ENCODE measurements at regions of chr13 and their contacts with region 1.

Region 1: GRCh38 chr13:49585220-49586157 is at the start of gene RCBTB1:
- DNase-seq: peak; percentile 89
- ATAC-seq: peak; percentile 88
- H3K4me3 ChIP-seq: peak within 1 kb of the TSS; percentile 85 to 91 (median 87)
- H3K4me3 Mint-ChIP-seq: peak within 1 kb of the TSS; percentile 96
- H3K27ac ChIP-seq: peak within 1 kb of the TSS; percentile 88 to 90
- H3K27ac Mint-ChIP-seq: peak within 1 kb of the TSS; percentile 92
- H3K4me1 ChIP-seq: peaks cover 17 to 23% of the 10 kb centered on the region in 2 donors
- H3K4me1 Mint-ChIP-seq: peaks cover 29% of the 10 kb centered on the region
- H3K27me3 ChIP-seq: no peaks in the 10 kb centered on the region
- H3K27me3 Mint-ChIP-seq: no peaks in the 10 kb centered on the region
- CTCF ChIP-seq: no peak
- total RNA-seq, gene RCBTB1: 35.2 and 42.1 TPM in 2 replicates

Region 2: GRCh38 chr13:49247643-49248621 is 337.6 kb before region 1 on chr13 and contains the start of gene CDADC1:
- CTCF ChIA-PET with region 1: no interaction called
- POLR2A ChIA-PET with region 1: interaction called, 8 read pairs
- intact Hi-C with region 1: loop called (anchors 1 kb)
- DNase-seq: peak; percentile 92
- ATAC-seq: peak; percentile 95
- H3K4me3 ChIP-seq: peak within 1 kb of the TSS; percentile 86 to 92 (median 89)
- H3K4me3 Mint-ChIP-seq: peak within 1 kb of the TSS; percentile 100
- H3K27ac ChIP-seq: peak within 1 kb of the TSS; percentile 76 to 86
- H3K27ac Mint-ChIP-seq: peak within 1 kb of the TSS; percentile 97
- H3K4me1 ChIP-seq: peaks cover 10 to 11% of the 10 kb centered on the region in 2 donors
- H3K4me1 Mint-ChIP-seq: peaks cover 26% of the 10 kb centered on the region
- H3K27me3 ChIP-seq: no peaks in the 10 kb centered on the region
- H3K27me3 Mint-ChIP-seq: no peaks in the 10 kb centered on the region
- CTCF ChIP-seq: no peak
- total RNA-seq, gene CDADC1: 14.5 and 15.1 TPM in 2 replicates

Region 3: DNA sequence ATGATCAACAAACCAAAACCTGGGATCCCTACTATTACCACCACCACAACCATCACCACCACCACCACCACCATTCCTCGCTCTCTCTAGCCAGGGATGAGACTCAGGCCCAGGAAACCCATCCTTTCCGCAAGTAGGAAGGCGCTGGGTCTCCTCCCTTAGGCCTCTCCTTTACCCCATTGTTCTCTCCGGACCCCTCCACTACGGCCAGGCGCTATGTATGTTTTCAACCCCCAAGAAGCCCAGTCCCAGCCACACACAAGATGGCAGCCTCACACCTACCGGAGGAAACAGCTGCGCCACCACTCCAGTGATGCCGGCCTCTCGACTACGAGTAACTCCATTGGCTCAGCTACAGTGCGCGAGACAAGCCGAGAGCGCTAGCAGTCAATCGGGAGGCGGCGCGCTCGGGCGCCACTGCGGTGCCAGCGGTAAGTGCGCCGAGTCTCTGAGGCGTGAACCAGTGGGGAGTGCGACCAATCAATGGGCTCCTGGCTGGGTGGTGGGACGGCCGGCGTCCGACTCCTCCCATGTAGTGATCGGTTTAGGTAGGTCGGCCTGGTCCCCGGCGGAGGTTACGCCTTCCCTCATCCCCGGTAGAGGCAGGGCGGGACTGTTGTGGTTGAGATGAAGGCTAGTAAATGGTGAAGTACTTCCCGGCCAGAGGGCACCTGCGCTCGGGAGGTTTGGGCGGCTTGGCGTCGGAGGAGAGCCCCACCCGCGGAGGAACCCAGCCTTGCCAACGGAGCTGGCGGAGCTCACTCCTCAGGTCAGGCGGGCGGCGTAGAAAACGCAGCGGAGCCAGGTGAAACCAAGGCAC is 141.6 kb before region 1 on chr13 and contains the starts of genes CAB39L and SETDB2:
- CTCF ChIA-PET with region 1: no interaction called
- POLR2A ChIA-PET with region 1: interaction called, 6 read pairs
- intact Hi-C with region 1: loop called (anchors 1 kb)
- DNase-seq: peak; percentile 100
- ATAC-seq: peak; percentile 89
- H3K4me3 ChIP-seq: peak within 1 kb of the TSS; percentile 63 to 98 (median 81)
- H3K4me3 Mint-ChIP-seq: peak within 1 kb of the TSS; percentile 96
- H3K27ac ChIP-seq: peak within 1 kb of the TSS; percentile 97
- H3K27ac Mint-ChIP-seq: peak within 1 kb of the TSS; percentile 99
- H3K4me1 ChIP-seq: peaks cover 33 to 51% of the 10 kb centered on the region in 2 donors
- H3K4me1 Mint-ChIP-seq: peaks cover 71% of the 10 kb centered on the region
- H3K27me3 ChIP-seq: no peaks in the 10 kb centered on the region
- H3K27me3 Mint-ChIP-seq: no peaks in the 10 kb centered on the region
- CTCF ChIP-seq: peak; percentile 34
- total RNA-seq, gene CAB39L: 8.9 and 9.6 TPM in 2 replicates
- total RNA-seq, gene SETDB2: 38.2 and 40.1 TPM in 2 replicates

Region 4: DNA sequence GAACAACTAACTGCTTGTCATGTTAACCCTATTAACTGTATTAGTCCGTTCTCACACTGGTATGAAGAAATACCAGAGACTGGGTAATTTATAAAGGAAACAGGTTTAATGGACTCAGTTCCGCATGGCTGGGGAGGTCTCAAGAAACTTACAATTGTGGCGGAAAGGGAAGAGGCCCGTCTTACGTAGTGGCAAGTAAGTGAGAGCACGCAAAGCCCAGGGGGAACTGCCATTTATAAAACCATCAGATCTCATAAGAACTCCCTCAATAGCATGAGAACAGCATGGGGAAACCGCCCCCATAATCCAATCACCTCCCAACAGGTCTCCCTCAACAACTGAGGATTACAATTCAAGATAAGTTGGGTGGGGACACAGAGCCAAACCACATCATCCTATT is 55.0 kb before region 1 on chr13:
- CTCF ChIA-PET with region 1: no interaction called
- POLR2A ChIA-PET with region 1: interaction called, 3 read pairs
- intact Hi-C with region 1: loop called (anchors 2 kb)
- DNase-seq: peak; percentile 77
- ATAC-seq: peak; percentile 84
- H3K4me3 ChIP-seq: peak overlapping the region in 1 of 5 experiments; percentile 5
- H3K4me3 Mint-ChIP-seq: peak overlapping the region; percentile 59
- H3K27ac ChIP-seq: peak overlapping the region; percentile 66 to 82
- H3K27ac Mint-ChIP-seq: peak overlapping the region; percentile 92
- H3K4me1 ChIP-seq: peaks cover 44 to 50% of the 10 kb centered on the region in 2 donors
- H3K4me1 Mint-ChIP-seq: peaks cover 66% of the 10 kb centered on the region
- H3K27me3 ChIP-seq: no peaks in the 10 kb centered on the region
- H3K27me3 Mint-ChIP-seq: no peaks in the 10 kb centered on the region
- CTCF ChIP-seq: no peak

Region 5: GRCh38 chr13:49546561-49546960 is 38.9 kb before region 1 on chr13:
- CTCF ChIA-PET with region 1: no interaction called
- POLR2A ChIA-PET with region 1: no interaction called
- intact Hi-C with region 1: no loop called
- DNase-seq: no peak
- ATAC-seq: no peak
- H3K4me3 ChIP-seq: no peak overlapping the region
- H3K4me3 Mint-ChIP-seq: no peak overlapping the region
- H3K27ac ChIP-seq: no peak overlapping the region
- H3K27ac Mint-ChIP-seq: no peak overlapping the region
- H3K4me1 ChIP-seq: peaks cover 0 to 4% of the 10 kb centered on the region in 2 donors
- H3K4me1 Mint-ChIP-seq: peaks cover 4% of the 10 kb centered on the region
- H3K27me3 ChIP-seq: no peaks in the 10 kb centered on the region
- H3K27me3 Mint-ChIP-seq: no peaks in the 10 kb centered on the region
- CTCF ChIP-seq: no peak

Region 6: DNA sequence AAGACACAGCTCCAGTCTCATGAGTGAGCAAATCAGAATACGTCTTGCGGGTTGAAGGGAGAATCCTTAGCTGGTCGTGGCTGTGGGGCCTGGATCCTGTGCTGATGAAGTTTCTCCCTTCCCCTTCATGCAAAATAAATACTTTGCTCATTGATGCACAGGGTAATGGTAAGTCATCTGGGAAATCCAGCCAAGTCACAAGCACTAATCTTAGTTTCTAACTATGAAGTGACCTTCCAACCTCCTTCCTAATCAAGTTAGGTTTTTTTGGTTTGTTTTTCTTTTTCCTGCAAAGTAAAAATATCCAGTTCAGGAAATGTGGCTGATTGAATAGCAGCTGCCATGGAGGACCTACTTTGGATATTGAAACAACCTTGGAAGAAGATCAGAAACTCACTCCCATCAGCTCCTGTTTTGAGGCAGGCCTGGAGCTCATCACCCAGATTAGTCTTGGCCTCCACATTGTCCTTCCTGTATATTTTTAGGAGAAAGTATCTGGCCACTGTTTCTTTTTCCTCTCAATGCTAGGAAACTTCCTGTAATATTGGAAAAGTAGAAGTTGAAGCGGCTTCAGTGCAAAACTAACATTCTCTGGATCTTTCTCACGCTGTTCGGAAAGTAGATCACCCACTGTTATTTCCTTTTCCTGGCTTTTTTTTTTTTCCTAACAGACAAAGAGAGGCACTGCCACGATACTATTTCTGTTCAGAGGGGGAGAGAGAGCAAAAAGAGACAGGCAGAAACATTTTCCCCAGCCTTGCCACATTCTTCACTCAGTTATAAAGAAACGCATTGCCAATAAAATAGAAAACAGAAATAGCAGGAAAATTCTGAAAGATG is 30.6 kb after region 1 on chr13:
- CTCF ChIA-PET with region 1: no interaction called
- POLR2A ChIA-PET with region 1: no interaction called
- intact Hi-C with region 1: no loop called
- DNase-seq: no peak
- ATAC-seq: no peak
- H3K4me3 ChIP-seq: no peak overlapping the region
- H3K4me3 Mint-ChIP-seq: no peak overlapping the region
- H3K27ac ChIP-seq: no peak overlapping the region
- H3K27ac Mint-ChIP-seq: no peak overlapping the region
- H3K4me1 ChIP-seq: no peaks in the 10 kb centered on the region
- H3K4me1 Mint-ChIP-seq: peaks cover 21% of the 10 kb centered on the region
- H3K27me3 ChIP-seq: no peaks in the 10 kb centered on the region
- H3K27me3 Mint-ChIP-seq: no peaks in the 10 kb centered on the region
- CTCF ChIP-seq: no peak

Region 7: GRCh38 chr13:49627831-49628652 is 42.6 kb after region 1 on chr13 and contains the start of gene ARL11:
- CTCF ChIA-PET with region 1: no interaction called
- POLR2A ChIA-PET with region 1: no interaction called
- intact Hi-C with region 1: loop called (anchors 2 kb)
- DNase-seq: peak; percentile 88
- ATAC-seq: peak; percentile 99
- H3K4me3 ChIP-seq: peak within 1 kb of the TSS; percentile 79 to 100 (median 90)
- H3K4me3 Mint-ChIP-seq: peak within 1 kb of the TSS; percentile 99
- H3K27ac ChIP-seq: peak within 1 kb of the TSS; percentile 61 to 78
- H3K27ac Mint-ChIP-seq: peak within 1 kb of the TSS; percentile 94
- H3K4me1 ChIP-seq: peaks cover 17 to 21% of the 10 kb centered on the region in 2 donors
- H3K4me1 Mint-ChIP-seq: peaks cover 44% of the 10 kb centered on the region
- H3K27me3 ChIP-seq: no peaks in the 10 kb centered on the region
- H3K27me3 Mint-ChIP-seq: no peaks in the 10 kb centered on the region
- CTCF ChIP-seq: no peak
- total RNA-seq, gene ARL11: 17.9 and 21.4 TPM in 2 replicates

Region 8: GRCh38 chr13:49792550-49793324 is 207.2 kb after region 1 on chr13 and contains the start of gene KPNA3:
- CTCF ChIA-PET with region 1: no interaction called
- POLR2A ChIA-PET with region 1: interaction called, 4 read pairs
- intact Hi-C with region 1: loop called (anchors 1 kb)
- DNase-seq: peak; percentile 97
- ATAC-seq: peak; percentile 87
- H3K4me3 ChIP-seq: peak within 1 kb of the TSS; percentile 79 to 88 (median 80)
- H3K4me3 Mint-ChIP-seq: peak within 1 kb of the TSS; percentile 97
- H3K27ac ChIP-seq: peak within 1 kb of the TSS; percentile 85 to 91
- H3K27ac Mint-ChIP-seq: peak within 1 kb of the TSS; percentile 99
- H3K4me1 ChIP-seq: peaks cover 20 to 21% of the 10 kb centered on the region in 2 donors
- H3K4me1 Mint-ChIP-seq: peaks cover 34% of the 10 kb centered on the region
- H3K27me3 ChIP-seq: no peaks in the 10 kb centered on the region
- H3K27me3 Mint-ChIP-seq: peaks cover 4% of the 10 kb centered on the region
- CTCF ChIP-seq: no peak
- total RNA-seq, gene KPNA3: 19.0 and 19.7 TPM in 2 replicates

Measured in B cell (primary cell).